BJ (cell line): ENCODE measurements at regions of chr6 and their contacts with region 1.

Region 1: DNA sequence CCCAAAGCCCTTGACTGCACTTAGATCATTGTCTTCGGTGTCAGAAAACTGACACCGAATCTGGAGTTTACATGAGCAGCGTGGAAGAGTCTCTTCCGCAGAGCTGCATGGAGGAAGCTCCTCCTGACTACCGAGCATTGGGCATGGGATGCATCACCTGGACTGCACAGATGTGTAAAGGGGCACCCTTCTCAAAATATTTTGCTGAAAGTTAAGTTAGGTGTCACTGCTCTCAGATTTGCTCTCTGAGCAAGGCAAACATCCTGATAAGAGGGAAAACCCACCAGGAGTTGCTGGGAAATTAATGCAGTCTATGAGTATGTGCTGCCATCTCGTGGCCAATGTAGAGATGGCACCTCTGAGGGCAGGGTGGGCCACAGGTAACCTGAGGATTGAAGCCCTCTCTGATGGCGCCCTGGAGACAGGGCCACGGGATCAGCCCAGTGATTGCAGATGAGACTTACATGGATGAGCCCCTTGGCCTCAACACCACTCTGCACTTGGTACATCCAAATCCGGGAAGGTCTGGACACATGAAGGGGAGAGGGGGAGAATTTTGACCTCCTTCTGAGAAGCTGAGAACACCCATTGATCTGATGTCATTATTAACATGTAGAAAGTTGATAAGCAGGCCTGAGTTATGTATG is 129.9 kb downstream of the LPA start:
- DNase-seq: no peak
- H3K4me3 ChIP-seq: no peak overlapping the region
- H3K27me3 ChIP-seq: no peaks in the 10 kb centered on the region
- CTCF ChIP-seq: peak; percentile 89

Region 2: DNA sequence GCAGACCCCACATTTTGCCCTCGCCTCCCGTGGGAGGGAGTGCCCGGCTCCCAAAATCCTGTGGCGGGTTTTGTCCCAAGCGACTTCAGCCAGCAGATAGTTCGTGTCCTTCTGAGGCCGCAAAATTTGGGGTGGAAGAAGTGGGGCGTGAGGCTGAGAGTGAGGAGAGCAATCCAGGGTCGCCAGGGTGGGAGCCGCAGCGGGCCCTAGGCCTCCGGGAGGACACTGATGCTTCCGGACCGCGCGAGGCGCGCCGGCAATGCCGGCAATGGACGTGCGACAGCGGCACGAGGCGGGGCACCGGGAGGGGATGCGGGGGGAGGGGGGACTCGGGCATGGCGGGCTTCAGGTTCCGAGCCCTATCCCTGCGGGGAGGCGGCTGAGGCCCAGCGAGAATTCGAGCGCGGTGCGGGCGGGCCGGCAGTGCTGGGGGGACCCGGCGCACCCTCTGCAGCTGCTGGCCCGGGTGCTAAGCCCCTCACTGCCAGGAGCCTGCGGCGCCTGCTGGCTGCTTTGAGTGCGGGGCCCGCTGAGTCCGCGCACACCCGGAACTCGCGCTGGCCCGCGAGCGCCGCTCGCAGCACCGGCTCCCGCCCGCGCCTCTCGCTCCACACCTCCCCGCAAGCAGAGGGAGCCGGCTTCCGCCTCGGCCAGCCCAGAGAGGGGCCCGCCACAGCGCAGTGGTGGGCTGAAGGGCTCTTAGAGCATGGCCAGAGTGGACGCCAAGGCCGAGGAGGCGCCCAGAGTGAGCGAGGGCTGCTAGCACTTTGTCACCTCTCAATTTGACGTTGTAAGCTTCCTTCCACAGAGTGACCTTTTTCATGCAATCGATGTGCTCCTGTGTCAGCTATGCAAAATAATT is 13.9 kb before region 1 on chr6:
- CTCF ChIA-PET with region 1: interaction called, 61 read pairs
- POLR2A ChIA-PET with region 1: no interaction called
- DNase-seq: peak; percentile 4
- H3K4me3 ChIP-seq: peak overlapping the region; percentile 67
- H3K27me3 ChIP-seq: no peaks in the 10 kb centered on the region
- CTCF ChIP-seq: no peak; the same call in 1 of the 2 replicates

Region 3: GRCh38 chr6:161029195-161029809 is 495.1 kb after region 1 on chr6:
- CTCF ChIA-PET with region 1: no interaction called
- POLR2A ChIA-PET with region 1: no interaction called
- DNase-seq: peak; percentile 94
- H3K4me3 ChIP-seq: no peak overlapping the region
- H3K27me3 ChIP-seq: no peaks in the 10 kb centered on the region; the same call in 1 of the 2 replicates
- CTCF ChIP-seq: no peak